Vagina (tissue), 2 donors: ENCODE measurements at regions of chr17 and their contacts with region 1.

Region 1: GRCh38 chr17:39621523-39622379 is 5.0 kb upstream of the PPP1R1B start:
- DNase-seq: no peak
- H3K4me3 ChIP-seq: no peak overlapping the region
- H3K27ac ChIP-seq: no peak overlapping the region
- H3K4me1 ChIP-seq: peaks cover 23% of the 10 kb centered on the region
- H3K27me3 ChIP-seq: no peaks in the 10 kb centered on the region
- CTCF ChIP-seq: peak; percentile 99 to 100 (median 99)
- POLR2A ChIP-seq: no peak

Region 2: GRCh38 chr17:39376434-39376833 is 245.3 kb before region 1 on chr17:
- intact Hi-C with region 1: no loop called
- DNase-seq: no peak
- H3K4me3 ChIP-seq: no peak overlapping the region
- H3K27ac ChIP-seq: no peak overlapping the region
- H3K4me1 ChIP-seq: peaks cover 25% of the 10 kb centered on the region
- H3K27me3 ChIP-seq: no peaks in the 10 kb centered on the region
- CTCF ChIP-seq: no peak
- POLR2A ChIP-seq: no peak

Region 3: GRCh38 chr17:39547713-39548478 is 73.9 kb before region 1 on chr17:
- intact Hi-C with region 1: loop called (anchors 2 kb)
- DNase-seq: no peak
- H3K4me3 ChIP-seq: no peak overlapping the region
- H3K27ac ChIP-seq: no peak overlapping the region
- H3K4me1 ChIP-seq: no peaks in the 10 kb centered on the region
- H3K27me3 ChIP-seq: no peaks in the 10 kb centered on the region
- CTCF ChIP-seq: peak; percentile 52 to 84 (median 75)
- POLR2A ChIP-seq: no peak

Region 4: DNA sequence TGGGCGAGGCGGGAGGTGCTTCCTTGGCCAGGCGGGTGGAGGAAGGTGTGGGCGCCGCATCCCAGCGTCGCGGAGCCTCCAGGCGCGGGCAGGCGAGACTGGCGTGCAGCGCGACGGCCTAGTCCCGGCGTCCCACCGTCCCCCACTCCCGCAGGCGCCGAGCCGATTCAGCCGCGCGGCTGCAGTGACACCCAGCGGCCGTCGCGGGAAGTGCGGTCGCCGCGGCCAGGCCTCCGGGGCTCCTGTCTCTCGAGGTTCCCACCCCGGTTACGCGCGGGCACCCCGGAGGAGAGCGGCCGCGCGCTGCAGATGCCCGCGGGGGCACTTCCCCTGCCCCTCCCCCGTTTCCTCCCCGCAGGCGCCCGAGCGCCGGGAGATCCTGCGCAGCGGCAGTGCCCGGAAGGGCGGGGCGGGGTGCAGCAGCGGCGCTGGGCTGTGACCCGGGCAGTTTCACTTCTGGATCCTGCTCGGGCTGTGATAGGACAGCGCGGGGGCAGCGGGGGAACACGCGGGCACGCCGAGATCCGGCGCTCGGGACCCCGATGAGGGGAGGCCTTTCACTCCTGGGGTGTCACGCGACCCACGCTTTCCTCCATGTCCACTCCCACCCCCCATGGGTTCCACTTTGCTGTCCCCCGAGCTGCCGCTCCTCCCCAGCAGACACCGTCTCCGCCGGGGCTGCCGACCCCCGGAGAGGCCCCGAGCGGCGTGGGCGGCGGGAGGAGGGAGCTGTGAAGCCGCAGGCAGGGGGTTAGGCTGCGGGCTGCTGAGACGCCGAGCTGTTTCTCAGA is 132.6 kb after region 1 on chr17:
- intact Hi-C with region 1: loop called (anchors 5 kb)
- DNase-seq: no peak
- H3K4me3 ChIP-seq: peak overlapping the region; percentile 74 to 77
- H3K27ac ChIP-seq: peak overlapping the region; percentile 94
- H3K4me1 ChIP-seq: peaks cover 27% of the 10 kb centered on the region
- H3K27me3 ChIP-seq: no peaks in the 10 kb centered on the region
- CTCF ChIP-seq: peak; percentile 94 to 100 (median 95)
- POLR2A ChIP-seq: peak in 1 of 2 donors; percentile 50